CD8-positive, alpha-beta T cell (primary cell): ENCODE measurements at regions of chr2 and their contacts with region 1.

Region 1: DNA sequence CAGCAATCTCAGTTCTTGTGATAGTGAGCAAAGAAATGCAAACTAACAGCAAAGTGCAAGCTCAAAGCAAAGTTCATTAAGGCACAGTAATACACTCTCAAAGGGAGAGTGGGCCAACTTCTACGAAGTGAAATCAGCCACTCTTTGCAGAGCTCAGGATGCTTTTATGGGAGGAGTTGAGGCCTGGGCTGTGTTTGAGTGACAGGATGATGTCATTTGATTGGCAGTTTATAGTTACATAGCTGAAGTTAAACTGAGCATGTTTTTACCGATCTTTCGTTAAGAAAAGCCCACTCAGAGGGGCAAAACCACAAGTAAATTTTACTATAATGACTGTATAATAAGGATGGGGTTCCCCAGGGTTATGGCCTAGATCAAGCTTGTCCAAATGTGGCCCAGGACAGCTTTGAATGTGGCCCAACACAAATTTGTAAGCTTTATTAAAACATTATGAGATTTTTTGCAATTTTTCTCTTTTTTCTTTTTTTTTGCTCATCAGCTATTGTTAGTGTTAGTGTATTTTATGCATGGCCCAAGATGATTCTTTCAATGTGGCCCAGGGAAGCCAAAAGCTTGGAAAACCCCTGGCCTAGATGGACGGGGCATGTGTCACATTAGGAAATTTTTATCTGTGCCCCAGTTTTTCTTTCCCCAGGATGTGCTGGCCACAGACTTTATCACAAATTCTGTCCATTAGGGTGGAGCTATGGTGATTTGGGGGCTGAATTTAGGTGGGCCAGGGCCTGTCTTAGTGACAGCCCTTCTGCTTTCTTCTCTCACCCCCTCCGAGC is 8.3 kb upstream of the DNAH7 start:
- DNase-seq: no peak
- ATAC-seq: no peak
- H3K4me3 ChIP-seq: no peak overlapping the region
- H3K4me3 Mint-ChIP-seq: no peak overlapping the region
- H3K27ac ChIP-seq: no peak overlapping the region
- H3K27ac Mint-ChIP-seq: no peak overlapping the region
- H3K4me1 ChIP-seq: peaks cover 13% of the 10 kb centered on the region
- H3K4me1 Mint-ChIP-seq: peaks cover 23% of the 10 kb centered on the region
- H3K27me3 ChIP-seq: no peaks in the 10 kb centered on the region
- H3K27me3 Mint-ChIP-seq: no peaks in the 10 kb centered on the region
- CTCF ChIP-seq: no peak

Region 2: GRCh38 chr2:196046123-196046917 is 30.7 kb before region 1 on chr2:
- CTCF ChIA-PET with region 1: no interaction called
- POLR2A ChIA-PET with region 1: no interaction called
- intact Hi-C with region 1: no loop called
- DNase-seq: no peak
- ATAC-seq: no peak
- H3K4me3 ChIP-seq: no peak overlapping the region
- H3K4me3 Mint-ChIP-seq: no peak overlapping the region
- H3K27ac ChIP-seq: no peak overlapping the region
- H3K27ac Mint-ChIP-seq: no peak overlapping the region
- H3K4me1 ChIP-seq: no peaks in the 10 kb centered on the region
- H3K4me1 Mint-ChIP-seq: no peaks in the 10 kb centered on the region
- H3K27me3 ChIP-seq: peaks cover 0 to 2% of the 10 kb centered on the region in 2 experiments
- H3K27me3 Mint-ChIP-seq: peaks cover 12% of the 10 kb centered on the region
- CTCF ChIP-seq: no peak

Region 3: GRCh38 chr2:196131384-196131937 is 54.5 kb after region 1 on chr2:
- CTCF ChIA-PET with region 1: interaction called, 9 read pairs
- POLR2A ChIA-PET with region 1: interaction called, 6 read pairs
- intact Hi-C with region 1: loop called (anchors 1 to 5 kb)
- DNase-seq: peak in 8 of 9 experiments; percentile 43 to 78 (median 64)
- ATAC-seq: peak; percentile 24
- H3K4me3 ChIP-seq: no peak overlapping the region
- H3K4me3 Mint-ChIP-seq: no peak overlapping the region
- H3K27ac ChIP-seq: peak overlapping the region in 1 of 2 experiments; percentile 52
- H3K27ac Mint-ChIP-seq: peak overlapping the region; percentile 83
- H3K4me1 ChIP-seq: no peaks in the 10 kb centered on the region
- H3K4me1 Mint-ChIP-seq: peaks cover 31% of the 10 kb centered on the region
- H3K27me3 ChIP-seq: no peaks in the 10 kb centered on the region
- H3K27me3 Mint-ChIP-seq: no peaks in the 10 kb centered on the region
- CTCF ChIP-seq: peak; percentile 49

Region 4: DNA sequence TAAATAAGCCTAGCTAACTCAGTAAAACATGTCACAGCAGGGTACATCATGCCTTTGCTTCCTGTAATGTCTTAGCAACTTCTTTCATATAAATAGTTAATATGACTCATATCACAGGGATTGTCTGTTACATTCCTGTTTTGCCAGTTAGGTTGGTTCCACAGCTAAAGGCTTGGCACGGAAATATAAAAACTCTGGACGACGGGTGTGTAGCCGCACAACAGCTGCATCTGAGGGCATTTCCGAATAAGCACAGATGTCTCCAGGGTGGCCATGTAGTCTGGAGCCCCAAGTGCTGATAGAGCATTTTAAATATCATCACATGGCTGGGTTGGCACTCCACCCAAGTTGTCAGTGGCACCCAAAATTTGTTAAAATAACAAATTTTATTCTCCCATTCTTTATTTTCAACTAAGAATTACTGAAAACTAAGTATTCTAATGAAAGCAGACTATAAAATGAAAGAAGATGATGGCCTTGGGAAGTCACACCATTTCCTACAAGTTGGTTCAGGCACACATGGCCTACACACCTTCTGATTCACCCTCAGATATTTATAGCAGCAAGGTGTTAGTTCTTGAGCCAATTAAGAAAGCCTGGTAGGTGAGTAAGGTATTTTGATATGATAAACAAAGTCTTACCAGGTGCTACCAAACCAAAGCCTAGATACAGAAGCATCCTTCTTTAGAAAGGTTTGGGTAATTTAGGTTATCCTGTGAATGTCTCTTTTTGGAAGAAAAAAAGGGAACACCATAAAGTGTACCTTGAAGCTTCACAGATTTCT is 156.2 kb after region 1 on chr2:
- CTCF ChIA-PET with region 1: interaction called, 13 read pairs
- POLR2A ChIA-PET with region 1: no interaction called
- intact Hi-C with region 1: no loop called
- DNase-seq: peak in 2 of 9 experiments; percentile 16 to 39
- ATAC-seq: no peak
- H3K4me3 ChIP-seq: no peak overlapping the region
- H3K4me3 Mint-ChIP-seq: no peak overlapping the region
- H3K27ac ChIP-seq: peak overlapping the region; percentile 31 to 66
- H3K27ac Mint-ChIP-seq: peak overlapping the region; percentile 91
- H3K4me1 ChIP-seq: peaks cover 85% of the 10 kb centered on the region
- H3K4me1 Mint-ChIP-seq: peaks cover 86% of the 10 kb centered on the region
- H3K27me3 ChIP-seq: no peaks in the 10 kb centered on the region
- H3K27me3 Mint-ChIP-seq: no peaks in the 10 kb centered on the region
- CTCF ChIP-seq: no peak

Region 5: GRCh38 chr2:196277002-196277401 is 200.0 kb after region 1 on chr2:
- CTCF ChIA-PET with region 1: interaction called, 53 read pairs
- POLR2A ChIA-PET with region 1: interaction called, 4 read pairs
- intact Hi-C with region 1: loop called (anchors 1 kb)
- DNase-seq: peak in 4 of 9 experiments; percentile 28 to 78 (median 56)
- ATAC-seq: peak; percentile 55
- H3K4me3 ChIP-seq: no peak overlapping the region
- H3K4me3 Mint-ChIP-seq: no peak overlapping the region
- H3K27ac ChIP-seq: no peak overlapping the region
- H3K27ac Mint-ChIP-seq: peak overlapping the region; percentile 72
- H3K4me1 ChIP-seq: peaks cover 38% of the 10 kb centered on the region
- H3K4me1 Mint-ChIP-seq: peaks cover 39% of the 10 kb centered on the region
- H3K27me3 ChIP-seq: no peaks in the 10 kb centered on the region
- H3K27me3 Mint-ChIP-seq: no peaks in the 10 kb centered on the region
- CTCF ChIP-seq: peak; percentile 85

Region 6: GRCh38 chr2:196639180-196640030 is 562.4 kb after region 1 on chr2 and contains the start of gene CCDC150:
- CTCF ChIA-PET with region 1: no interaction called
- POLR2A ChIA-PET with region 1: no interaction called
- intact Hi-C with region 1: loop called in 1 of 2 experiments (anchors 5 kb)
- DNase-seq: peak; percentile 89 to 96 (median 94)
- ATAC-seq: peak; percentile 100
- H3K4me3 ChIP-seq: peak within 1 kb of the TSS; percentile 68 to 85
- H3K4me3 Mint-ChIP-seq: peak within 1 kb of the TSS; percentile 86
- H3K27ac ChIP-seq: peak within 1 kb of the TSS; percentile 12 to 27
- H3K27ac Mint-ChIP-seq: peak within 1 kb of the TSS; percentile 38
- H3K4me1 ChIP-seq: peaks cover 7% of the 10 kb centered on the region
- H3K4me1 Mint-ChIP-seq: peaks cover 13% of the 10 kb centered on the region
- H3K27me3 ChIP-seq: no peaks in the 10 kb centered on the region
- H3K27me3 Mint-ChIP-seq: no peaks in the 10 kb centered on the region
- CTCF ChIP-seq: no peak
- total RNA-seq, gene CCDC150: 0.72 to 0.81 TPM